Adrenal gland (tissue), 19 donors: ENCODE measurements at regions of chr11 and their contacts with region 1.

Region 1: DNA sequence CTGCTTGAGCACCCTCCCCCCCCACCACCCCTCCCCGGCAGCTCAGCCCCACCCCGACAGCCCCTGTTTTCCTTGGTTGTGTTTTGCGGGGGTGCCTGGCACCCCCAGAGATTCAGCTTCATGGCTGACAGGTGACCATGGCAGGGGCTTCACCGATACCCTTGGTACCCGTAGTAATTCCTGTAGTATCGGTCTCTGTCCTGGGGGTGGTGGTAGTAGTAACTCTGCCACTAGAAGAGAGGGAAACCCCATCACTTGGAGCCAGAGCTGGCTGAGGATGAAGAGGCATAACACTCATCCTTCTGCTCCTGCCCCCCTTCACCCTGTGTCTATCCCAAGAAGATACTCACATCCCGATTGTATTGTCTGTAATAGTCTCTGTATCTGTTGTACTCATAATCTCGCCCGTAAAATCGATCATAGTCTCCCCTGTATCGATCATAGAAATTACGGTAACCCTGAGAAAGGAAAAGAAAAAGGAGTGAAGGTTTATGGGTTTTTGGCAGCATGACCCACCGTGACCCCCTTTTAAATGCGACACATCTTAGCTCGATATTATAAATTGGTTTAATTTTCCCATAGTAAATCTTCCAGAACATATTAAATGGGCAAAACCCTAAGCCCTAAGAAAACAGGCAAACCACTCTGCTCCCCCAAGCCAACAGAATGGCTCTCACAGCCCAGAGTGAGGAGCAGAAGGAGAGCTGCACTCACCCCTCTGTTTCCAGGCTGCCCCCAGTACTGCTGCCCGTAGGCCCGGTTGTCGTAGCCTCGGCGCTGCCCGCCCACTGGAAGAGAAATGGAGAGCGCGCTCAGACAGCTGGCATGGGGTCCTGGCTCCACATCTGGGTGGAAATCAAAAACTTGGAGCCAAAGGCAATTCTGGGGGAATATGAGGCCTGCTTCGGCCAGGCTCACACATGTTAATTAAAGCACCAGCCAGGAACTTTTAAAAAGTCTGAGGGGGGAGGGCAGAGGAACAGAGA is 8.0 kb downstream of the GNG3 start:
- DNase-seq: peak in 1 of 7 donors; percentile 12
- H3K4me3 ChIP-seq: no peak overlapping the region
- H3K27ac ChIP-seq: peak overlapping the region in 1 of 5 donors; percentile 84
- H3K4me1 ChIP-seq: peaks cover 24 to 25% of the 10 kb centered on the region in 2 donors
- H3K27me3 ChIP-seq: no peaks in the 10 kb centered on the region
- CTCF ChIP-seq: no peak
- POLR2A ChIP-seq: no peak

Region 2: GRCh38 chr11:62123669-62124185 is 591.7 kb before region 1 on chr11 and contains the start of gene INCENP:
- intact Hi-C with region 1: no loop called
- DNase-seq: peak; percentile 97 to 99 (median 98)
- H3K4me3 ChIP-seq: peak within 1 kb of the TSS; percentile 77 to 91 (median 82)
- H3K27ac ChIP-seq: peak within 1 kb of the TSS in 2 of 5 donors; percentile 24 to 51
- H3K4me1 ChIP-seq: peaks cover 10 to 13% of the 10 kb centered on the region in 2 donors
- H3K27me3 ChIP-seq: no peaks in the 10 kb centered on the region
- CTCF ChIP-seq: no peak
- POLR2A ChIP-seq: peak in 1 of 2 donors; percentile 40
- total RNA-seq, gene INCENP: 7.3 to 23.2 (median 15.4) TPM

Region 3: DNA sequence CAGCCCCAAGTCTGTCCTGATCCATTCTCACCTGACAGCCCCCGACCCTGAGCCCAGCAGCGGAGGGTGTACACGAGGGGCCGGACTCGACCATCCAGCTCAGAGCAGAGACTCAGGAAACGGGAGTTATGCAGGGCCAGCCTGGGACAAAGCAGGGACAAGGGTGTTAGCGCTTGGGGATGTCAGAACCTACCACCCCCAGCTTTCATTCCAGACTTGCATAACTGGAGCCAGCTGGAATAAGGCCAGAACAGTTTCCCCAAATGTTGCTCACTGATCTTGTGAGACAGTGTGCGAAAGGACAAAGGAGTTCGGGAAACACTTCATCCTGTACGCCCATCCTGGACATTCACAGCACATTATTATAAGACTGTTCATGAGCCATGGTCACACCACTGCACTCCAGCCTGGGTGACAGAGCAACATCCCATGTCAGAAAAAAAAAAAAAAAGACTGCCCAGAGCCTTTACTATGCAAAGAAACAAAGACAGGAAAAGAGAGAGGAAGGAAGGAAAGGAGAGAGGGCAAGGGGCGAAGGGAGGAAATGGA is 138.2 kb before region 1 on chr11:
- intact Hi-C with region 1: no loop called
- DNase-seq: peak in 3 of 7 donors; percentile 61 to 80 (median 65)
- H3K4me3 ChIP-seq: no peak overlapping the region
- H3K27ac ChIP-seq: peak overlapping the region in 3 of 5 donors; percentile 1 to 98 (median 92)
- H3K4me1 ChIP-seq: peaks cover 12 to 32% of the 10 kb centered on the region in 2 donors
- H3K27me3 ChIP-seq: no peaks in the 10 kb centered on the region
- CTCF ChIP-seq: no peak
- POLR2A ChIP-seq: peak in 1 of 2 donors; percentile 21

Region 4: DNA sequence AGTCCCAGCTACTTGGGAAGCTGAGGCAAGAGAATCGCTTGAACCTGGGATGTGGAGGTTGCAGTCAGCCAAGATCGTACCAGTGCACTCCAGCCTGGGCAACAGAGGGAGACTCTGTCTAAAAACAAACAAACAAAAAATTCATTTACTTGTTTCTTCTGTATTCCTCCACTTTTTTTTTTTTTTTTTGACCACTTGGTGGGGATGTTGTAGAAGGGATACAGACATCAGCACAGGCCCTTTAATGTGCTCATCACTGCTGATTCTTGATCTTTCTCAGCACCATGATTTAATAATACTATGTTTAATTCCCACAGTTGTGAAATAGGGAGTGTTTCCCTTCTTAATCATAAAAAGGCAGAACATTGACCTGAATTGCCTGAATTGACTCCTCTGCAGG is 17.4 kb after region 1 on chr11:
- intact Hi-C with region 1: no loop called
- DNase-seq: no peak
- H3K4me3 ChIP-seq: no peak overlapping the region
- H3K27ac ChIP-seq: no peak overlapping the region
- H3K4me1 ChIP-seq: peaks cover 7 to 28% of the 10 kb centered on the region in 2 donors
- H3K27me3 ChIP-seq: no peaks in the 10 kb centered on the region
- CTCF ChIP-seq: peak in 1 of 6 experiments; percentile 8
- POLR2A ChIP-seq: no peak

Region 5: GRCh38 chr11:62771144-62772021 is 55.9 kb after region 1 on chr11 and contains the start of gene TAF6L:
- intact Hi-C with region 1: loop called in 1 of 2 experiments (anchors 5 kb)
- DNase-seq: peak; percentile 97 to 99 (median 99)
- H3K4me3 ChIP-seq: peak within 1 kb of the TSS in 2 of 4 donors; percentile 21 to 75
- H3K27ac ChIP-seq: peak within 1 kb of the TSS; percentile 73 to 97 (median 93)
- H3K4me1 ChIP-seq: peaks cover 13 to 26% of the 10 kb centered on the region in 2 donors
- H3K27me3 ChIP-seq: no peaks in the 10 kb centered on the region
- CTCF ChIP-seq: no peak
- POLR2A ChIP-seq: peak; percentile 8 to 56
- total RNA-seq, gene TAF6L: 18.3 to 42.3 (median 25.9) TPM